Naive thymus-derived CD4-positive, alpha-beta T cell (primary cell): ENCODE measurements at regions of chr3 and their contacts with region 1.

Region 1: GRCh38 chr3:52983336-52983807 is 62.5 kb downstream of the SFMBT1 start:
- DNase-seq: peak in 8 of 9 donors; percentile 71 to 94 (median 88)
- ATAC-seq: peak; percentile 96
- H3K4me3 ChIP-seq: no peak overlapping the region
- H3K4me3 Mint-ChIP-seq: peak overlapping the region; percentile 52 to 86 (median 75)
- H3K27ac ChIP-seq: peak overlapping the region; percentile 25
- H3K27ac Mint-ChIP-seq: peak overlapping the region; percentile 76 to 97 (median 88)
- H3K4me1 ChIP-seq: peaks cover 16 to 27% of the 10 kb centered on the region in 2 donors
- H3K4me1 Mint-ChIP-seq: peaks cover 30 to 73% (median 47%) of the 10 kb centered on the region in 7 donors
- H3K27me3 ChIP-seq: no peaks in the 10 kb centered on the region
- H3K27me3 Mint-ChIP-seq: no peaks in the 10 kb centered on the region

Region 2: GRCh38 chr3:52742418-52743041 is 240.8 kb before region 1 on chr3:
- CTCF ChIA-PET with region 1: interaction called, 3 read pairs
- POLR2A ChIA-PET with region 1: no interaction called
- intact Hi-C with region 1: loop called in 1 of 2 experiments (anchors 5 kb)
- DNase-seq: peak in 5 of 9 donors; percentile 18 to 35 (median 20)
- ATAC-seq: peak; percentile 50
- H3K4me3 ChIP-seq: no peak overlapping the region
- H3K4me3 Mint-ChIP-seq: no peak overlapping the region
- H3K27ac ChIP-seq: no peak overlapping the region
- H3K27ac Mint-ChIP-seq: no peak overlapping the region
- H3K4me1 ChIP-seq: no peaks in the 10 kb centered on the region
- H3K4me1 Mint-ChIP-seq: peaks cover 0 to 2% (median 0%) of the 10 kb centered on the region in 7 donors
- H3K27me3 ChIP-seq: no peaks in the 10 kb centered on the region
- H3K27me3 Mint-ChIP-seq: no peaks in the 10 kb centered on the region

Region 3: GRCh38 chr3:52851348-52851747 is 132.0 kb before region 1 on chr3:
- CTCF ChIA-PET with region 1: no interaction called
- POLR2A ChIA-PET with region 1: no interaction called
- intact Hi-C with region 1: loop called in 1 of 2 experiments (anchors 2 kb)
- DNase-seq: peak in 5 of 9 donors; percentile 22 to 40 (median 35)
- ATAC-seq: peak; percentile 70
- H3K4me3 ChIP-seq: no peak overlapping the region
- H3K4me3 Mint-ChIP-seq: no peak overlapping the region
- H3K27ac ChIP-seq: no peak overlapping the region
- H3K27ac Mint-ChIP-seq: no peak overlapping the region
- H3K4me1 ChIP-seq: no peaks in the 10 kb centered on the region
- H3K4me1 Mint-ChIP-seq: no peaks in the 10 kb centered on the region
- H3K27me3 ChIP-seq: no peaks in the 10 kb centered on the region
- H3K27me3 Mint-ChIP-seq: no peaks in the 10 kb centered on the region

Region 4: DNA sequence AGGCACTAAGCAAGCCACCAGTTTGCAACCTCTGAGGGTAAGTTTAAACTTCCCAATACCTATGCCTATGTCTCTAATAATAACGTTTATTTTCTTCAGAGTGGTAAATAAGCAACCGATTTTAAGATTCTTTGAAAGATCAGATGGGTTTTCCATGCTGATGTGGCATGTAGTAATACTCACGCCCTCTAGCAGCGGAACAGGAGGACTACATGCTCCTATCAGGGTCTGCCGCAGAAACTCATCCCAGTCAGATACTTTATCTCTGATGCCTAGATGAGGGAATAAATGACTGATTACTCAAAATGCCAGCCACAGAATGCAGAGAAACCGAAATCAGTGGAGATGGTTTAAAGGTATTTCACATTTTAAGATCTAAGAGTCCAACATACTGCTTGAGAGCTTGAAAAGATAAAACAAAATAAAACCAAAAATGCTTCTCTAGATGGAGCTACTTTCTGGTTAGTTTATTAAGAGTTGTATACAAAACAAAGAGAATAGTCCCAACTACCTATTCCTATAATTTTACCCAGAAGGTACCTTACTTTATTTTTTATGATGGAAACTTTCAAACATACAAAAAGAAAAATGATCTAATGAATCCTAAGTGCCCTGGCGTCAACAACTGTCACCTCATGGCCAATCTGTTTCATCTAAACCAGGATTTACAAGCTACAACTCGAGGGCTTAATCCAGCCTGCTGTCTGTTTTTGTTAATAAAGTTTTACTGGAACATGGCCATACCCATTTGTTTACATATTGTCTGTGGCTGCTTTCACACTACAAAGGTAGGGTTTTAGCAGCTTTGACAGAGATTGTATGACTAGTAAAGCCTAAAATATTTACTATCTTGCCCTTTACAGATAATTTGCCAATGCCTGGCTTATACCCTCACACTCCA is 48.5 kb before region 1 on chr3:
- CTCF ChIA-PET with region 1: interaction called, 6 read pairs
- POLR2A ChIA-PET with region 1: interaction called, 6 read pairs
- intact Hi-C with region 1: loop called in 1 of 2 experiments (anchors 1 kb)
- DNase-seq: peak in 8 of 9 donors; percentile 30 to 58 (median 45)
- ATAC-seq: peak; percentile 97
- H3K4me3 ChIP-seq: no peak overlapping the region
- H3K4me3 Mint-ChIP-seq: peak overlapping the region in 4 of 10 donors; percentile 13 to 69 (median 27)
- H3K27ac ChIP-seq: no peak overlapping the region
- H3K27ac Mint-ChIP-seq: peak overlapping the region in 8 of 9 donors; percentile 7 to 75 (median 53)
- H3K4me1 ChIP-seq: peaks cover 0 to 4% of the 10 kb centered on the region in 2 donors
- H3K4me1 Mint-ChIP-seq: peaks cover 5 to 25% (median 16%) of the 10 kb centered on the region in 7 donors
- H3K27me3 ChIP-seq: no peaks in the 10 kb centered on the region
- H3K27me3 Mint-ChIP-seq: no peaks in the 10 kb centered on the region

Region 5: DNA sequence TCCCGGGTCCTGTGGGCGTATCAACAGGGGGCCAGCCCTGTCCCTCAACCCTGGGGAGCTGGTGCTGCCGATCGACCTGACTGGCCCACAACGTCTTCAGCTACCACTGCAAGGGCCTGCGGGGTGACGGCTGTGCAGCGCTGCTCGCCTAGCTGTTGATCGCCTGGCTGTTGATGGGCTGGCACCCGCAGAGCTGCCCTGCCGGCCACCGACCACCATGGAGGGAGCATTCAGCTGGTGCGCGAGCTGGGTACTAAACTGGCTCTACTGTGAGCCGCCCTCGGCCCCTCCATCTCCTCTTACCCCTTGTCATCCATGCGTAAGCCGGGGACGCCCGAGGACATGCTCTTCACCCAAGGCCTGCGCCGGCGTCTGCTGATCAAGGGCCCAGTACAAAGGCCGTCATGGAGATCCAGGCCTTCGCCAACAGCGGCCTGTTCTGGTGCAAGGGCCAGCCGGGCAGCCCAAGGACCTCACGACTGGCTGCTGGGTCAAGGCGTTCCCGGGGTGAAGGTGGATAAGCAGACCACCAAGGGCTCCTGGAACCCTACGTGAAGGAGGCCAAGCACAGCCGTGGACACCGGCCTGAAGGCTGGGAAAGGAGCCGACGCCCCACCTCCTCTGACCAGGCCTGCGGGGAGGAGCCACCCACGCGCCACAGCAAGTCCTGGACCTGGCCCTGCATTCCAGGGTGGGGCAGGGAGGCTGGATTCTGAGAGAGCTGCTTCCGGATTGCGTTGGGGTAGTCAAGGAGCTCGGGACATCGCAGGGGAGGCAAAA is 15.5 kb after region 1 on chr3:
- CTCF ChIA-PET with region 1: interaction called, 4 read pairs
- POLR2A ChIA-PET with region 1: interaction called, 8 read pairs
- intact Hi-C with region 1: loop called in 1 of 2 experiments (anchors 2 kb)
- DNase-seq: no peak
- ATAC-seq: no peak
- H3K4me3 ChIP-seq: no peak overlapping the region
- H3K4me3 Mint-ChIP-seq: no peak overlapping the region
- H3K27ac ChIP-seq: no peak overlapping the region
- H3K27ac Mint-ChIP-seq: peak overlapping the region in 1 of 9 donors; percentile 10
- H3K4me1 ChIP-seq: no peaks in the 10 kb centered on the region
- H3K4me1 Mint-ChIP-seq: peaks cover 0 to 21% (median 7%) of the 10 kb centered on the region in 7 donors
- H3K27me3 ChIP-seq: no peaks in the 10 kb centered on the region
- H3K27me3 Mint-ChIP-seq: no peaks in the 10 kb centered on the region

Region 6: GRCh38 chr3:53023068-53023823 is 39.9 kb after region 1 on chr3:
- CTCF ChIA-PET with region 1: interaction called, 5 read pairs
- POLR2A ChIA-PET with region 1: interaction called, 13 read pairs
- intact Hi-C with region 1: no loop called
- DNase-seq: no peak
- ATAC-seq: no peak
- H3K4me3 ChIP-seq: no peak overlapping the region
- H3K4me3 Mint-ChIP-seq: peak overlapping the region in 7 of 10 donors; percentile 1 to 58 (median 21)
- H3K27ac ChIP-seq: no peak overlapping the region
- H3K27ac Mint-ChIP-seq: peak overlapping the region in 5 of 9 donors; percentile 32 to 83 (median 51)
- H3K4me1 ChIP-seq: peaks cover 11 to 20% of the 10 kb centered on the region in 2 donors
- H3K4me1 Mint-ChIP-seq: peaks cover 21 to 82% (median 69%) of the 10 kb centered on the region in 7 donors
- H3K27me3 ChIP-seq: no peaks in the 10 kb centered on the region
- H3K27me3 Mint-ChIP-seq: no peaks in the 10 kb centered on the region

Region 7: GRCh38 chr3:53030619-53031449 is 47.5 kb after region 1 on chr3:
- CTCF ChIA-PET with region 1: interaction called, 3 read pairs
- POLR2A ChIA-PET with region 1: interaction called, 13 read pairs
- intact Hi-C with region 1: loop called in 1 of 2 experiments (anchors 2 kb)
- DNase-seq: peak in 7 of 9 donors; percentile 23 to 53 (median 49)
- ATAC-seq: peak; percentile 84
- H3K4me3 ChIP-seq: peak overlapping the region; percentile 20
- H3K4me3 Mint-ChIP-seq: peak overlapping the region; percentile 56 to 83 (median 72)
- H3K27ac ChIP-seq: peak overlapping the region; percentile 56
- H3K27ac Mint-ChIP-seq: peak overlapping the region; percentile 54 to 93 (median 89)
- H3K4me1 ChIP-seq: peaks cover 12 to 43% of the 10 kb centered on the region in 2 donors
- H3K4me1 Mint-ChIP-seq: peaks cover 18 to 86% (median 64%) of the 10 kb centered on the region in 7 donors
- H3K27me3 ChIP-seq: no peaks in the 10 kb centered on the region
- H3K27me3 Mint-ChIP-seq: no peaks in the 10 kb centered on the region